A673 (cell line): ENCODE measurements at regions of chrX and their contacts with region 1.

Region 1: GRCh38 chrX:111719426-111720210 is 38.6 kb downstream of the ALG13 start:
- DNase-seq: peak; percentile 4
- H3K4me3 ChIP-seq: no peak overlapping the region
- H3K27ac ChIP-seq: no peak overlapping the region
- H3K4me1 ChIP-seq: no peaks in the 10 kb centered on the region
- H3K27me3 ChIP-seq: peaks cover 3% of the 10 kb centered on the region
- CTCF ChIP-seq: peak; percentile 55

Region 2: GRCh38 chrX:111555406-111555958 is 164.1 kb before region 1 on chrX:
- CTCF ChIA-PET with region 1: no interaction called
- POLR2A ChIA-PET with region 1: no interaction called
- intact Hi-C with region 1: no loop called
- DNase-seq: no peak
- H3K4me3 ChIP-seq: no peak overlapping the region
- H3K27ac ChIP-seq: no peak overlapping the region
- H3K4me1 ChIP-seq: no peaks in the 10 kb centered on the region
- H3K27me3 ChIP-seq: no peaks in the 10 kb centered on the region
- CTCF ChIP-seq: no peak

Region 3: DNA sequence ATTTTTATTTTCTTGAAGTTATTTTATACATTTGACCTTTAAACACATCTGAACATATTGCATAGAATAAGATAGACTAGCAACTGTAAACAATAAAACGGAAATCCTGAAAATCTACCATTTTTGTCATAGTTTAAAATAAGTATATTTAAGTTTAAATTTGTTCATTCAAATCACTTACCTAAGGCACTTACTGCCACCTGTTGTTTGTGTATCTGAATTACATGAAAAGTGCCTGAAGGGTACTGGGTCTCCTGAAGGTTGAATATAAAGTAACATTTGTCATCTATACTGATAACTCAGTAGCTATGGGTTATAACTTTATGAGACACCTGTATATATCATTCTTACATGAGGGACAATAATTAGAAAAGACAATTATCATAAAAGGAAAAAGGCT is 324.4 kb after region 1 on chrX:
- CTCF ChIA-PET with region 1: no interaction called
- POLR2A ChIA-PET with region 1: no interaction called
- intact Hi-C with region 1: loop called (anchors 10 kb)
- DNase-seq: peak; percentile 6
- H3K4me3 ChIP-seq: no peak overlapping the region
- H3K27ac ChIP-seq: no peak overlapping the region
- H3K4me1 ChIP-seq: no peaks in the 10 kb centered on the region
- H3K27me3 ChIP-seq: peaks cover 17% of the 10 kb centered on the region
- CTCF ChIP-seq: peak; percentile 38; the same call in 1 of the 2 replicates

Region 4: DNA sequence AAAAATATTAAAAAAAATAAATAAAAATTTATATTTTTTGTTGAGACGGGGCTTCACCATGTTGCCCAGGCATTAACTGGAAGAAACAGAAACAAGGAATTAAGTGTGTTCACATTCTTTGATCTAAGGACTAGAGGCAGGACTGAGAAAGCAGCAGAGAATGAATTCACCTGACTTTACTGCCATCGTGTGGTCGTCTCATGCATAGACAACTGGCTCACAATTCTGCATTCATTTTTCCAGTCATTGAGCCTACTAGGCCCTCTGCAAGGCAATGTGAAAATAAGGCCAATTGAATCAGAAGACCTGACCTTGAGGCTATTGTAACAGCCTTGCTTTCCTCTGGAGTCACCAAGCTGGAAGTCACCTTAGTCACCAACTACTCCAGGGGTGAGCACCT is 922.7 kb after region 1 on chrX:
- CTCF ChIA-PET with region 1: interaction called, 3 read pairs
- POLR2A ChIA-PET with region 1: no interaction called
- intact Hi-C with region 1: loop called (anchors 10 kb)
- DNase-seq: peak; percentile 57
- H3K4me3 ChIP-seq: no peak overlapping the region
- H3K27ac ChIP-seq: no peak overlapping the region
- H3K4me1 ChIP-seq: no peaks in the 10 kb centered on the region
- H3K27me3 ChIP-seq: no peaks in the 10 kb centered on the region
- CTCF ChIP-seq: peak; percentile 71